Naive thymus-derived CD4-positive, alpha-beta T cell (primary cell): ENCODE measurements at regions of chr11 and their contacts with region 1.

Region 1: GRCh38 chr11:695538-696248 is at the start of gene TMEM80:
- DNase-seq: peak; percentile 91 to 98 (median 98)
- ATAC-seq: peak; percentile 76
- H3K4me3 ChIP-seq: peak within 1 kb of the TSS; percentile 97
- H3K4me3 Mint-ChIP-seq: peak within 1 kb of the TSS; percentile 84 to 92 (median 89)
- H3K27ac ChIP-seq: peak within 1 kb of the TSS; percentile 100
- H3K27ac Mint-ChIP-seq: peak within 1 kb of the TSS; percentile 88 to 98 (median 95)
- H3K4me1 ChIP-seq: peaks cover 13 to 42% of the 10 kb centered on the region in 2 donors
- H3K4me1 Mint-ChIP-seq: peaks cover 40 to 56% (median 52%) of the 10 kb centered on the region in 7 donors
- H3K27me3 ChIP-seq: no peaks in the 10 kb centered on the region
- H3K27me3 Mint-ChIP-seq: no peaks in the 10 kb centered on the region
- total RNA-seq, gene TMEM80: 26.2 to 44.3 (median 40.4) TPM

Region 2: GRCh38 chr11:447923-448731 is 247.6 kb before region 1 on chr11:
- CTCF ChIA-PET with region 1: no interaction called
- POLR2A ChIA-PET with region 1: interaction called, 3 read pairs
- intact Hi-C with region 1: loop called in 1 of 2 experiments (anchors 1 kb)
- DNase-seq: peak; percentile 86 to 98 (median 93)
- ATAC-seq: peak; percentile 86
- H3K4me3 ChIP-seq: peak overlapping the region; percentile 74
- H3K4me3 Mint-ChIP-seq: peak overlapping the region; percentile 84 to 95 (median 89)
- H3K27ac ChIP-seq: peak overlapping the region; percentile 98
- H3K27ac Mint-ChIP-seq: peak overlapping the region; percentile 79 to 98 (median 95)
- H3K4me1 ChIP-seq: peaks cover 16 to 24% of the 10 kb centered on the region in 2 donors
- H3K4me1 Mint-ChIP-seq: peaks cover 9 to 25% (median 22%) of the 10 kb centered on the region in 7 donors
- H3K27me3 ChIP-seq: no peaks in the 10 kb centered on the region
- H3K27me3 Mint-ChIP-seq: peaks cover 0 to 7% (median 0%) of the 10 kb centered on the region in 5 donors

Region 3: GRCh38 chr11:560305-561147 is 135.2 kb before region 1 on chr11 and contains the starts of genes LMNTD2 and RASSF7:
- CTCF ChIA-PET with region 1: no interaction called
- POLR2A ChIA-PET with region 1: interaction called, 4 read pairs
- intact Hi-C with region 1: loop called in 1 of 2 experiments (anchors 1 kb)
- DNase-seq: peak; percentile 89 to 98 (median 94)
- ATAC-seq: peak; percentile 98
- H3K4me3 ChIP-seq: peak within 1 kb of the TSS; percentile 68
- H3K4me3 Mint-ChIP-seq: peak within 1 kb of the TSS; percentile 78 to 94 (median 89)
- H3K27ac ChIP-seq: peak within 1 kb of the TSS; percentile 82
- H3K27ac Mint-ChIP-seq: peak within 1 kb of the TSS; percentile 35 to 93 (median 84)
- H3K4me1 ChIP-seq: peaks cover 14 to 17% of the 10 kb centered on the region in 2 donors
- H3K4me1 Mint-ChIP-seq: peaks cover 4 to 17% (median 9%) of the 10 kb centered on the region in 7 donors
- H3K27me3 ChIP-seq: no peaks in the 10 kb centered on the region
- H3K27me3 Mint-ChIP-seq: peaks cover 0 to 18% (median 0%) of the 10 kb centered on the region in 5 donors
- total RNA-seq, gene LMNTD2: 2.8 to 14.7 (median 9.6) TPM
- total RNA-seq, gene RASSF7: 20.0 to 45.4 (median 35.5) TPM

Region 4: GRCh38 chr11:662689-663274 is 32.9 kb before region 1 on chr11:
- CTCF ChIA-PET with region 1: interaction called, 3 read pairs
- POLR2A ChIA-PET with region 1: no interaction called
- intact Hi-C with region 1: loop called in 1 of 2 experiments (anchors 2 kb)
- DNase-seq: peak in 6 of 9 donors; percentile 24 to 48 (median 32)
- ATAC-seq: peak; percentile 86
- H3K4me3 ChIP-seq: no peak overlapping the region
- H3K4me3 Mint-ChIP-seq: no peak overlapping the region
- H3K27ac ChIP-seq: no peak overlapping the region
- H3K27ac Mint-ChIP-seq: peak overlapping the region in 1 of 9 donors; percentile 46
- H3K4me1 ChIP-seq: no peaks in the 10 kb centered on the region
- H3K4me1 Mint-ChIP-seq: peaks cover 0 to 7% (median 2%) of the 10 kb centered on the region in 7 donors
- H3K27me3 ChIP-seq: no peaks in the 10 kb centered on the region
- H3K27me3 Mint-ChIP-seq: no peaks in the 10 kb centered on the region

Region 5: GRCh38 chr11:765025-765801 is 69.5 kb after region 1 on chr11:
- CTCF ChIA-PET with region 1: no interaction called
- POLR2A ChIA-PET with region 1: interaction called, 3 read pairs
- intact Hi-C with region 1: loop called in 1 of 2 experiments (anchors 2 kb)
- DNase-seq: peak; percentile 47 to 74 (median 68)
- ATAC-seq: peak; percentile 92
- H3K4me3 ChIP-seq: no peak overlapping the region
- H3K4me3 Mint-ChIP-seq: no peak overlapping the region
- H3K27ac ChIP-seq: no peak overlapping the region
- H3K27ac Mint-ChIP-seq: peak overlapping the region in 5 of 9 donors; percentile 40 to 85 (median 64)
- H3K4me1 ChIP-seq: no peaks in the 10 kb centered on the region
- H3K4me1 Mint-ChIP-seq: peaks cover 0 to 7% (median 0%) of the 10 kb centered on the region in 7 donors
- H3K27me3 ChIP-seq: no peaks in the 10 kb centered on the region
- H3K27me3 Mint-ChIP-seq: no peaks in the 10 kb centered on the region

Region 6: DNA sequence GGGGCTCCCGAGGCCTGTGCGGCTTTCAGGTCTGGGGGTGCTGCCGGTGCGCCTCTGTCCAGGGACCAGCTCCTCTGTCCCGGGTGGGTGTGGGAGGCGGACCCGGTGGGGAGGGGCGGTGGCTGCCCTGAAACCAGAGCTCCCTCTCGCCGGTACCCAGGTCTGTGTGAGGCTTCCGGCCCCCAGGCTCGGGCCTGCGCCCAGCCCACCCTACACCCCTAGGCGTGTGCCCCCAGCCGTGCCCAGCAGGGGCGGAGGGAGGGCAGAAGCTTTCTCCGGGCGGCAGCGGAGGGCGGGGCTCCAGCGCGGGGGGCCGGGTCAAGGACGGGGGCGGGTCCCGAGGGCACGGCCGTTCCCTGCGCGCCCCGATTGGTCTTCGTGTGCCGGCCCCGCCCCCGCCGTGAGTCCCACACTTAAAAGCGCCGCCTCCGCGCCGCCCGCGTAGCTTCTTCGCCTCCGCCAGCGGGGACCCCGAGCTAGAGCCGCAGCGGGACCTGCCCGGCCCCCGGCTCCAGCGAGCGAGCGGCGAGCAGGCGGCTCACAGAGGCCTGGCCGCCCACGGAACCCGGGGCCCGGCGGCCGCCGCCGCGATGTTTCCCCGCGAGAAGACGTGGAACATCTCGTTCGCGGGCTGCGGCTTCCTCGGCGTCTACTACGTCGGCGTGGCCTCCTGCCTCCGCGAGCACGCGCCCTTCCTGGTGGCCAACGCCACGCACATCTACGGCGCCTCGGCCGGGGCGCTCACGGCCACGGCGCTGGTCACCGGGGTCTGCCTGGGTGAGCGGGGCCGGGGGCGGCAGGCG is 123.6 kb after region 1 on chr11:
- CTCF ChIA-PET with region 1: no interaction called
- POLR2A ChIA-PET with region 1: interaction called, 13 read pairs
- intact Hi-C with region 1: no loop called
- DNase-seq: peak; percentile 85 to 95 (median 92)
- ATAC-seq: peak; percentile 86
- H3K4me3 ChIP-seq: peak overlapping the region; percentile 86
- H3K4me3 Mint-ChIP-seq: peak overlapping the region; percentile 82 to 92 (median 86)
- H3K27ac ChIP-seq: peak overlapping the region; percentile 91
- H3K27ac Mint-ChIP-seq: peak overlapping the region in 7 of 9 donors; percentile 67 to 93 (median 86)
- H3K4me1 ChIP-seq: peaks cover 12 to 15% of the 10 kb centered on the region in 2 donors
- H3K4me1 Mint-ChIP-seq: peaks cover 0 to 24% (median 13%) of the 10 kb centered on the region in 7 donors
- H3K27me3 ChIP-seq: no peaks in the 10 kb centered on the region
- H3K27me3 Mint-ChIP-seq: no peaks in the 10 kb centered on the region